Heart right ventricle (tissue), 16 donors: ENCODE measurements at regions of chrX and their contacts with region 1.

Region 1: GRCh38 chrX:65677954-65678469 is 10.6 kb downstream of the MSN start:
- DNase-seq: peak in 1 of 2 donors; percentile 76
- ATAC-seq: peak; percentile 40 to 82 (median 67)
- H3K4me3 ChIP-seq: no peak overlapping the region
- H3K27ac ChIP-seq: peak overlapping the region; percentile 53 to 100 (median 97)
- H3K4me1 ChIP-seq: peaks cover 11 to 100% (median 98%) of the 10 kb centered on the region in 9 donors
- H3K27me3 ChIP-seq: peaks cover 0 to 19% (median 0%) of the 10 kb centered on the region in 7 donors
- CTCF ChIP-seq: no peak

Region 2: GRCh38 chrX:65706041-65706828 is 28.2 kb after region 1 on chrX:
- intact Hi-C with region 1: loop called in 2 of 10 experiments (anchors 5 kb)
- DNase-seq: peak; percentile 22 to 59
- ATAC-seq: peak; percentile 47 to 93 (median 80)
- H3K4me3 ChIP-seq: no peak overlapping the region
- H3K27ac ChIP-seq: peak overlapping the region; percentile 58 to 85 (median 78)
- H3K4me1 ChIP-seq: peaks cover 2 to 87% (median 57%) of the 10 kb centered on the region in 9 donors
- H3K27me3 ChIP-seq: no peaks in the 10 kb centered on the region
- CTCF ChIP-seq: no peak

Region 3: GRCh38 chrX:65723706-65724105 is 45.7 kb after region 1 on chrX:
- intact Hi-C with region 1: loop called in 1 of 10 experiments (anchors 10 kb)
- DNase-seq: no peak
- ATAC-seq: peak in 3 of 8 donors; percentile 8 to 39 (median 18)
- H3K4me3 ChIP-seq: no peak overlapping the region
- H3K27ac ChIP-seq: peak overlapping the region in 6 of 10 donors; percentile 12 to 67 (median 36)
- H3K4me1 ChIP-seq: peaks cover 0 to 83% (median 38%) of the 10 kb centered on the region in 9 donors
- H3K27me3 ChIP-seq: peaks cover 0 to 5% (median 0%) of the 10 kb centered on the region in 7 donors
- CTCF ChIP-seq: no peak